ENCODE measurements at regions of chr1 and their contacts with region 1.

Region 1: DNA sequence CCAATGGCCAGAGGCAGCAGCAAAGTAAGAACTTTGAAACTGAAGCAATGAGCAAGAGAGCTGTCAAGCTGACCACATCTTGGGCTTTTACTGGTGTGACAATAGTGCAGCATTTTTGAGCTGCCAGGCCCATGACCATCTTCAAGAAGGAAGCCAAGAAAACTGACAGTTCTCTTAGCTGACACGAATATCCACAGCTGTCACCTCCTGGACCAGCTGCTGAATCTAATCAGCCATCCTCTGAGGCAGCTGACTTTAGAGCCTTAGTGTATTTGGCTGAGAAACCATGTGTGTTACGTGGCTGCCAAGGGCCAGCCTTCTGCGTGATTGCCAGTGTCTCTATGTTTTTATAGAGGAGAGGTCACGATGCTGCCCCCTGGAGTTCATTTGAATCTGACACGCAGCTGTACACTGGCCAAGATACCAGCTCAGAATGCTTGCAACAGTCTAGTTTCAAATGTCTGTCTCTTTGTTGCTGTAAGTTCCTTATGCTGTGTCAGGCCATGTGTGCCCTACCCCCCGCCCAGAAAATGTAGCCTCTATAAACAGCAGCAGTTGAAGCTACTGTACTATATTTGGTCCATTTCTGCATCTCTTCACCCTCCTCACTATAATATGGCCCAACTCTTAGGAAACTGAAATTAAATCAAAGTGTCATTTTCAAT is 39.7 kb downstream of the PALMD start:
- DNase-seq: peak; percentile 86 to 94
- ATAC-seq: peak; percentile 90 to 96 (median 95)
- H3K4me3 ChIP-seq: no peak overlapping the region
- H3K27ac ChIP-seq: peak overlapping the region; percentile 86
- H3K4me1 ChIP-seq: peaks cover 55% of the 10 kb centered on the region
- H3K27me3 ChIP-seq: no peaks in the 10 kb centered on the region
- CTCF ChIP-seq: peak; percentile 61

Region 2: GRCh38 chr1:99544328-99544727 is 141.3 kb before region 1 on chr1:
- intact Hi-C with region 1: loop called in 1 of 2 experiments (anchors 5 kb)
- DNase-seq: no peak
- ATAC-seq: peak in 1 of 4 donors; percentile 16
- H3K4me3 ChIP-seq: no peak overlapping the region
- H3K27ac ChIP-seq: no peak overlapping the region
- H3K4me1 ChIP-seq: peaks cover 20% of the 10 kb centered on the region
- H3K27me3 ChIP-seq: no peaks in the 10 kb centered on the region
- CTCF ChIP-seq: no peak

Region 3: GRCh38 chr1:99645699-99646531 is 39.7 kb before region 1 on chr1 and contains the start of gene PALMD:
- intact Hi-C with region 1: loop called (anchors 1 to 2 kb)
- DNase-seq: peak; percentile 70 to 86
- ATAC-seq: peak; percentile 84 to 88 (median 84)
- H3K4me3 ChIP-seq: peak within 1 kb of the TSS; percentile 72
- H3K27ac ChIP-seq: peak within 1 kb of the TSS; percentile 92
- H3K4me1 ChIP-seq: peaks cover 21% of the 10 kb centered on the region
- H3K27me3 ChIP-seq: no peaks in the 10 kb centered on the region
- CTCF ChIP-seq: no peak
- total RNA-seq, gene PALMD: 46.2 to 219 (median 113) TPM